SK-N-SH (cell line): ENCODE measurements at regions of chr5 and their contacts with region 1.

Region 1: DNA sequence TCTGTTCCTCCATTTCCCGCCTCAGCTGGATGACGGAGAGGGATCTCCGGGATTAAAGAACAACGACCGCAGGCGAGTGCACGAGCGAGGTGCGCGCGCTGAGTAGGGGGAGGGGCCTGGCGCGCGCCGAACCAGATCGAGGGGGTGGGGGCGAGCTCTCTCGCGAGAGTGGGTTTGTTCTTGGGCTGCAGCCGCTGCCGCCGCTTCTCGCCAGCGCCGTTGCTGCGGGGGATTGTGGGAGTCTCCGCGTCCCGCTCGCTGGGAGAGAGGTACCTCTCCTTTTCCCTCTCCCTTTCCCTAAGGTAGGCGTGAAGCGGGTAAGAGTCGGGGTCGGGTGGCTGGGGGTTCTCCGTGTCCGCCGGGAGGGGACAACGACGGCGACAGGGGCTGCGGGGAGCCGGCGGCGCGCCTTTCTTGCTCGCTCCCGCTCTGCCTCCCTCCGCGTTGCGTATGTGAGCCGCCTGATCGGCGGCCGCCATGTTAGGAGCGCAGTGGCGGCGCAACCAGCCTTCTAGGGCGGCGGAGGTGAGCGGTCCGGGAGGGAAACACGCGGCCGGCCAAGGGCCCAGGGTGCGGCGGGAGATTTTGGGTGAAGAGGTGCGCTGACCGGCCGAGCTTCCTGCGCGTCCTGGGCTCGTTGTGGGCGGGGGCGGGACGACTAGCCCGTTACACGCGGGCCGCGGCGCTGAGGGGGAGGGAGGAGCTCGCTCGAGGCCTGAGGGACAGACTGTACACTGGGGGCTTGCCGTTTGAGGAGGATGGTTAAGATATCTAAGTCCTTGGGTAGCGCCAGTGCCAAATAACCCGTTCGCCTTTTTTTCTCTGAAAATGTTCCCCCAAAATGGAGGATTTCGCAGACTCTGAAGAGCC is at the start of gene MATR3:
- DNase-seq: peak; percentile 97
- H3K4me3 ChIP-seq: peak within 1 kb of the TSS; percentile 73 to 85
- H3K27ac ChIP-seq: peak within 1 kb of the TSS; percentile 97 to 99
- H3K4me1 ChIP-seq: peaks cover 10 to 20% of the 10 kb centered on the region in 2 experiments; a peak in 3 of 4 replicates
- H3K27me3 ChIP-seq: no peaks in the 10 kb centered on the region
- CTCF ChIP-seq: no peak
- EP300 ChIP-seq: no peak
- RAD21 ChIP-seq: no peak
- polyA plus RNA-seq, gene MATR3: 40.4 and 63.6 TPM in 2 replicates

Region 2: DNA sequence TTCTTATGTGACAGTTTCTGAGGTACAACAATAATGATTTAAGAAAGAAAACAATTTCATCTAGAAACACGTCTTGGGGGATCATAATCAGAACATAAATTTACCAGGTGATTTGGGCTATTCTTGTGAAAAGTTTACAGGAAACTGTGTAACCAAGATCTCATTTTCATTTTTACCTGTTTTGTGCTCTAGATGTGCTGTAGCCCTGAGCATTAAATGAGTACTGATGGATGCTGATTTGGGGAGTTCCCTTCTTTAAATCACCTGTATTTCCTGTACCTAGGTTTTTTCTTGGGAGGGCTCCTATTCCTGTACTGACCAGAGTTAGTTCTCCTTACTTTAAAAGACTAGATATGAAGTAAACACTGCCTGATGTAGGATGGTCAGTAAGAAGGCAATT is 12.5 kb after region 1 on chr5:
- CTCF ChIA-PET with region 1: interaction called, 13 read pairs
- POLR2A ChIA-PET with region 1: interaction called, 5 read pairs
- DNase-seq: no peak
- H3K4me3 ChIP-seq: no peak overlapping the region
- H3K27ac ChIP-seq: no peak overlapping the region
- H3K4me1 ChIP-seq: peaks cover 6 to 24% of the 10 kb centered on the region in 2 experiments; a peak in 3 of 4 replicates
- H3K27me3 ChIP-seq: no peaks in the 10 kb centered on the region
- CTCF ChIP-seq: no peak
- EP300 ChIP-seq: no peak
- RAD21 ChIP-seq: no peak

Region 3: DNA sequence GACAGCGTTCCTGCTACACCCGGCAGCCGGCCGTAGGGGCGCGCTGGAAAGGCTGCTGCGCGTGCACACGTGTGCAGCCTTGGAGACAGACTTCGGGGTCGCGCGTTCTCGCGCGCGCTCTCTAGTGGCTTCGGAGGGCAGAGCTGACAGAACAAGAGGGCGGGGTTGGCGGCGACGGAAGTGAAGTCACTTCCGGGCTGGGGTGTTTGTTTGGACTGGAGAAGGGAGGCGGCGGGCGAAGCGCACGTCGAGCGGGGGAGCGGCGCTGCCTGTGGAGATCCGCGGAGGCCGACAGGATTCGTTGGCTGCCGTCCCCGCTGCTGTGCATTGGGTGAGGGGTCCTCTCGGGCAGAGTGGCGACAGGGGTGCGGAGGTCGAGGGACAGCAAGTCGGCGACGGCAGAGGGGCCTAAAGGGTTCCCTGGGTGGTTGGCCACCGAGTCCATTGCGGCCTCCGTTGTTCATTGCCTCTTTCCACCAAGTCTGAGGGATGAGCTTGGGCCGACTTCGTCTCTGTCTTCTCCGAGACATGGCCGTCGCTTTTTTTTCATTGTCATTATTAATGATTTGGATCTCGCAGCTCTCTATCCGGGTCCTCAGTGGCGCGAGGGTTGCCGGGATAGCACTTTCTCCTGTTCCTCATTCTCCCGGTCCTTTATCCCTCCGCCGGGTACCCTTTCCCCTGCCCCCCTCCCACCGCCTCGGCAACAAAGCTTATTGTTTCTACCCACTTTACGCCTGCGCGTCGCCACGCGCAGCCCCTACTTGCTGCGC is 48.1 kb after region 1 on chr5 and contains the start of gene PAIP2:
- CTCF ChIA-PET with region 1: interaction called, 11 read pairs
- POLR2A ChIA-PET with region 1: interaction called, 34 read pairs
- DNase-seq: peak; percentile 93
- H3K4me3 ChIP-seq: peak within 1 kb of the TSS; percentile 93 to 96
- H3K27ac ChIP-seq: peak within 1 kb of the TSS; percentile 96 to 99
- H3K4me1 ChIP-seq: peaks cover 0 to 5% of the 10 kb centered on the region in 2 experiments; a peak in 2 of 4 replicates
- H3K27me3 ChIP-seq: no peaks in the 10 kb centered on the region
- CTCF ChIP-seq: peak; percentile 68
- EP300 ChIP-seq: peak in 1 of 2 experiments; percentile 40; a peak in 1 of 4 replicates
- RAD21 ChIP-seq: peak; percentile 56
- polyA plus RNA-seq, gene PAIP2: 52.9 and 73.2 TPM in 2 replicates